ENCODE measurements at regions of chr4 and their contacts with region 1.

Region 1: DNA sequence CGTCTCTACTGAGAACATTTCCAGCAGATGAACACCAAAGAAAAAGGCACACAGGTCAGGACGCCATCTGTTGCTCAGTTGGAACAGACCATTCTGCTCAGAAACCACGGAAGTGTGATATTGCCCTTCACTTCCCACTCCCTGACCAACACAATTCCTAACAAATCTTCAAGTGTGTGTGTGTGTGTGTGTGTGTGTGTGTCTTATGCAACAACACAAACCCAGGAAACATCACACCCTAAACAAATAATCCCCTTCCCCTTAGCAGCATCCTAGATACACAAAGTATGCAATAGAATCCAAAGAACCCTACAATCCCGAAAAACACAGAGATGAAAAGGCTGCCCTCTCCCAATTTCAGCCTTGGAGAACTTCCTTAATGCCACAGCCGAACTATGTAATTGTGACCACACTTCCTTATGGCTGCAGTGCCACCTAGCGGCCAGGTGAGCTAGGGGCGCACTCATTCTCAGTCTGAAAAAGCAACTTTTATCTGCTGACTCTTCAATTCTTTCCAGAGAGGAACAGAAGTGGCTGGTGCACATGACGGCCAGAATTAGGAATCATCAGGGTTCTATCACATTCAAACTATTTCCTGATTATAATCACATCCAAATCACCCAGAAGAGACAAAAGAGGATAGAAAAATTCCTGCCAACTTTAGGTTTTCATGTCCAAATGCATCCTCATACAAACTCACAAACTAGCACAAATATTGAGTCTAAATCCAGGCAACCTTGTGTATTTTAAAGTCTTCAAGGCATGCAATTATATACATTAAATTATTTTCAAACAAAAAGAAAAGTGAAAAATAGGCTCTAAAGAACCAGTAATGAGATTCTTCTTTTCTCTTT is 164.9 kb downstream of the DHX15 start:
- DNase-seq: peak; percentile 71
- H3K4me3 ChIP-seq: no peak overlapping the region
- H3K27ac ChIP-seq: no peak overlapping the region
- H3K4me1 ChIP-seq: no peaks in the 10 kb centered on the region
- H3K27me3 ChIP-seq: peaks cover 8% of the 10 kb centered on the region
- CTCF ChIP-seq: peak; percentile 93

Region 2: DNA sequence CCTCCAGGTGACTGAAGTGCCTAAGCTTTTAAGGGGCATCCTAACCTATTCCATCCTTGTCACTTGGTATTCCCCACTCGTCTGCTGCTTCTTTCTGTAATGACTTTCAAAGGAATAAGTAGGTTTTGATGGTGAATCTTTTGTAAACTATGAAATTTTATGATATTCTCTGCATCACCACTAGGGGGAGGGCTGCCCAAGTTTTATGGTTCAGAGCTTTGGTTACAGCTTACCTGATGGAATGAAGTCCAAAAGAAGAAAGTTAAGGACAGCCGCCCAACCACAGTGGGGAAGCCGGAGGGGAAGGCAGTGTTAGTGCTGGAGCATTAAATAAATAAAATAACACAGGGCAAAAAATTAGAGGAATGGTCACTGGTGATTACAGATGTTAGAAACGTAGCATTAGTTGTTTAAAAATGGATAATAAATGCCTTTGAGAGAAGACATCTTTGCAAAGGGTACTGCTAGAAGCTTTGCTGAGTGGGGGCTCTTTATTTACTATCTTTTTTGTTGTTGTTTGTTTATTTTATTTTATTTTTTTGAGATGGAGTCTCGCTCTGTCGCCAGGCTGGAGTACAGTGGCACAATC is 1521.8 kb before region 1 on chr4:
- CTCF ChIA-PET with region 1: no interaction called
- POLR2A ChIA-PET with region 1: no interaction called
- intact Hi-C with region 1: loop called (anchors 2 kb)
- DNase-seq: peak; percentile 28
- H3K4me3 ChIP-seq: no peak overlapping the region
- H3K27ac ChIP-seq: no peak overlapping the region
- H3K4me1 ChIP-seq: no peaks in the 10 kb centered on the region
- H3K27me3 ChIP-seq: no peaks in the 10 kb centered on the region
- CTCF ChIP-seq: peak; percentile 82

Region 3: GRCh38 chr4:23135792-23136645 is 1283.4 kb before region 1 on chr4:
- CTCF ChIA-PET with region 1: interaction called, 3 read pairs
- POLR2A ChIA-PET with region 1: no interaction called
- intact Hi-C with region 1: loop called (anchors 2 kb)
- DNase-seq: peak; percentile 50
- H3K4me3 ChIP-seq: no peak overlapping the region
- H3K27ac ChIP-seq: no peak overlapping the region
- H3K4me1 ChIP-seq: no peaks in the 10 kb centered on the region
- H3K27me3 ChIP-seq: no peaks in the 10 kb centered on the region
- CTCF ChIP-seq: peak; percentile 74

Region 4: DNA sequence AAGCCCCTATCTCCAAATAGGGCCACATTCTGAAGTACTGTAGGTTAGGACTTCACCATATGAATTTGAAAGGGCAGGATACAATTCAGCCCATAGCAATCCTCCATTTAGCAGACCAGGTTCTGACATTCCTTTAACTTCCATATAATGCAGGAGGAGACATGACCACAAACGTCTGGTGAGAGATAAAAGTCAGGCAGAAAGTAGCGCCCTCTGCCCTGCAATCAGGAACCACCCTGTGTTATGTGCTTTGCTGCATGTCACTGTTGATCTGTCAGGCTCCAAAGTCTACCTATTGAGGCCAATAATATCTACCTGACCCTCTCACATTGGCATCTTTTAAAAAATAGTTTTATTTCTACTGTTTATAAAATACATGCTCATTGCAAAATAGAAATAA is 771.0 kb after region 1 on chr4:
- CTCF ChIA-PET with region 1: no interaction called
- POLR2A ChIA-PET with region 1: no interaction called
- intact Hi-C with region 1: no loop called
- DNase-seq: no peak
- H3K4me3 ChIP-seq: no peak overlapping the region
- H3K27ac ChIP-seq: no peak overlapping the region
- H3K4me1 ChIP-seq: no peaks in the 10 kb centered on the region
- H3K27me3 ChIP-seq: no peaks in the 10 kb centered on the region
- CTCF ChIP-seq: no peak